ENCODE measurements at regions of chr1 and their contacts with region 1.

Region 1: DNA sequence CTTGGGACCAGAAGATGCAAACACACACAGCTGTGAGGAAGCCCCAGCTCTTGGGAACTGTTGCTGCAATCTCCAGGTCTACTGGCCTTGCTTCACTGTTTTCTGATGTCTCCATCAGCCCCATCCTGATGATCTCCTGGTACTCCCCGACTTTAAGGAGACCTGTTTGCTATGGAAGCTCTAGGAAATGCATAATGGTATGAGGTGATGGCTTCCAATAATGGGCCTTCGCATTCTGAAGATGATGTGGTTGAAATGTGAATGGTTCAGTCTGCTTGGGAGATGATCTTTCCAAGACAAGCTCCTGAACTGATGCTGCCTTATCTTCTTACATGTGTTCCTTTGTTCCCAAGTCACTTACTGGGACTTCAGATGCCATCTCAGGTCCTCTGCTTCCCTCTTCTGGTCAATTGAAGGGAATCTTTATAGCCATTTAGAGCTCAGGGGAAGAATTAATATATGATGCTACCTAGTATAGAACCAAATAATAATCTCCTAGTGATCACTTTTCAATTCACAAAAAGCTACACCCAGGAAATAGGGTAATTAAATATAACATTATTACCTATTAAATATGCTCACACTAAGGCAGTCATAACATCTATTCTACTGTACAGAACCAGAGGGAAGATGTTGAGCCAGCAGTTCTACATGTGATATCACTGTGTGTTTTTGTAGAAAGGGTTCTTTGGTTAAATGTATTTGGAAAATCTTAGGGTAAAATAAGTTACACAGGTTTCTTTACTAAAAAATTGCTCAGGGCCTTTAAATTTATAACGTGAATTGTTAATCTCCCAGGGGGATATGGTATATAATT is 73.9 kb upstream of the VTCN1 start:
- DNase-seq: peak; percentile 50
- H3K4me3 ChIP-seq: no peak overlapping the region
- H3K27ac ChIP-seq: no peak overlapping the region
- H3K27me3 ChIP-seq: no peaks in the 10 kb centered on the region
- CTCF ChIP-seq: peak; percentile 74

Region 2: DNA sequence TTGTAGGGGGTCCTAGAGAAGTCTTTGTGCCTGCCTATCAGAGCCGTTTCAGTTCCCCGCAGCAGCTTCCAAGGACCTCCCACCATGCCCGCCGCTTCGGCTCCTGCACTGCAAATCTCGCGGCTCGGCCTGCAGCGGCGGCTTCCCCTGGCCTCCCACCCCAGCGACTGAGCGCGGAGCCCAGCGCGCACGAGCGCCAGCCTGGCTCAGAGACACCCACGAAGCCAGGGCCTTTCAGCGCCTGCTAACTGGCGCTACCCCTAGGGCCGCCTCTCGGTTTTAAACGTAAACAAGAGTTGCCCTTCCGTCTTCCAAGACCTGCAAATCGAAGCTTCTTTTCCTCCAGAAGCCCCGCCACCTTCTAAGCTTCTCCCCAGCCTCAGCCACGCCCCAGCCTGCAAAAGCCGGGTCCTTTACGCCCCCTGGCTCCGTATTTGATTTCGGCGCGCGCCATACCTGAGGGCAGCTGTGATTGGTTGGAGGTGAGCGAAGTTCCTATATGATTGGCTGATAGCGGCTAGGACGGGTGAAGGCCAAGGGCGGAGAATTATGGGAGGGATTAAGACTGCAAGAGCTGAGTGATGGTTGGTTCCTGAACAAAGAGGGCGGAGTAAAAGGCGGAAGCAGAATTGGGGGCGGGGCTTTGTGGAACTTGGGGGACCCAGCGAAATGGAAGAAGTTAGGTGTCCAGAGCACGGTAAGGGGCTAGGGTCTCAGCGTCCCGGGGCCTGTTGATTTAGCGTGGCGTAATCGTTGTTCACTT is 224.7 kb before region 1 on chr1 and contains the start of gene TTF2:
- CTCF ChIA-PET with region 1: interaction called, 381 read pairs
- POLR2A ChIA-PET with region 1: no interaction called
- DNase-seq: peak; percentile 92
- H3K4me3 ChIP-seq: peak within 1 kb of the TSS; percentile 89
- H3K27ac ChIP-seq: peak within 1 kb of the TSS; percentile 42
- H3K27me3 ChIP-seq: no peaks in the 10 kb centered on the region
- CTCF ChIP-seq: peak; percentile 30
- polyA plus RNA-seq, gene TTF2: 10.0 and 12.4 TPM in 2 replicates

Region 3: GRCh38 chr1:117067533-117068370 is 216.9 kb before region 1 on chr1:
- CTCF ChIA-PET with region 1: interaction called, 381 read pairs
- POLR2A ChIA-PET with region 1: interaction called, 3 read pairs
- DNase-seq: peak; percentile 41
- H3K4me3 ChIP-seq: no peak overlapping the region
- H3K27ac ChIP-seq: no peak overlapping the region
- H3K27me3 ChIP-seq: no peaks in the 10 kb centered on the region
- CTCF ChIP-seq: peak; percentile 90

Region 4: GRCh38 chr1:117077267-117077666 is 207.3 kb before region 1 on chr1:
- CTCF ChIA-PET with region 1: interaction called, 381 read pairs
- POLR2A ChIA-PET with region 1: no interaction called
- DNase-seq: no peak
- H3K4me3 ChIP-seq: no peak overlapping the region
- H3K27ac ChIP-seq: peak overlapping the region; percentile 74
- H3K27me3 ChIP-seq: no peaks in the 10 kb centered on the region
- CTCF ChIP-seq: no peak

Region 5: DNA sequence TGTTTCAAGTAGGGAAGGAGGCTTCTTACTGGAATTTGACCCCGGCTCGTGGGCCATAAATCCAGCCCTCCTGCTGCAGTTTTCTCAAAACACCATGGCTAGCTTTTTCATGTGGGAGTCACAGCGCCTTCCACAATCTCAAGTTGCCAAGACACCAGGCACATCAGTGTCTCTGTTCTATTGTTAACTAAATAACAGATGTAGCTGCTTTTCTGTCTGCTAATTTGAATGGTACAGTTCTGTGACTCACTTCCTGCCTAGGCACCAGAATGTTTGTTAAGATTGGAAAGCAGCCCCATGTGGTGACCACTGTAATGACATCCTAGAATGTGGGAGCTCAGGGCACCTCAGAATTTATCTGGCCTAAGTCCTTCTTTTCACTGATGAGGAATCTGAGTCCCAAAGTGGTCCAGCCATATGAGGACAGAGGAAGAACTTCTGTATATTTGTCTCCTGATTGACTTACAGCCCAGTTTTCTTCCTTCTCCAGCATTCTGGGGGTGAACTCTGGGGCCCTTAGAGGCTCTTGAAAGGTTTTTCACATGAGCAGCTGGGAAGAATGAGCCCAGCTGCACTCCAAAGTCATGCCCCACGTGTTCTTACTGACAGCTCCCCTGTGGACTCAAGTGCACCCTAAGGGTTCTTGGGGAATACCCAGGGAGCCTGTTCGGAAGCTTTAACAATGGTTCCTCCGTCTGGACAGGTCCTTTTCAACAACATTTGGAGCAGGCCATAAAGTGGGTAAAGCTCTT is 190.6 kb before region 1 on chr1:
- CTCF ChIA-PET with region 1: interaction called, 18 read pairs
- POLR2A ChIA-PET with region 1: no interaction called
- DNase-seq: no peak
- H3K4me3 ChIP-seq: no peak overlapping the region
- H3K27ac ChIP-seq: peak overlapping the region; percentile 90
- H3K27me3 ChIP-seq: no peaks in the 10 kb centered on the region
- CTCF ChIP-seq: peak; percentile 29; the same call in 1 of the 2 replicates

Region 6: DNA sequence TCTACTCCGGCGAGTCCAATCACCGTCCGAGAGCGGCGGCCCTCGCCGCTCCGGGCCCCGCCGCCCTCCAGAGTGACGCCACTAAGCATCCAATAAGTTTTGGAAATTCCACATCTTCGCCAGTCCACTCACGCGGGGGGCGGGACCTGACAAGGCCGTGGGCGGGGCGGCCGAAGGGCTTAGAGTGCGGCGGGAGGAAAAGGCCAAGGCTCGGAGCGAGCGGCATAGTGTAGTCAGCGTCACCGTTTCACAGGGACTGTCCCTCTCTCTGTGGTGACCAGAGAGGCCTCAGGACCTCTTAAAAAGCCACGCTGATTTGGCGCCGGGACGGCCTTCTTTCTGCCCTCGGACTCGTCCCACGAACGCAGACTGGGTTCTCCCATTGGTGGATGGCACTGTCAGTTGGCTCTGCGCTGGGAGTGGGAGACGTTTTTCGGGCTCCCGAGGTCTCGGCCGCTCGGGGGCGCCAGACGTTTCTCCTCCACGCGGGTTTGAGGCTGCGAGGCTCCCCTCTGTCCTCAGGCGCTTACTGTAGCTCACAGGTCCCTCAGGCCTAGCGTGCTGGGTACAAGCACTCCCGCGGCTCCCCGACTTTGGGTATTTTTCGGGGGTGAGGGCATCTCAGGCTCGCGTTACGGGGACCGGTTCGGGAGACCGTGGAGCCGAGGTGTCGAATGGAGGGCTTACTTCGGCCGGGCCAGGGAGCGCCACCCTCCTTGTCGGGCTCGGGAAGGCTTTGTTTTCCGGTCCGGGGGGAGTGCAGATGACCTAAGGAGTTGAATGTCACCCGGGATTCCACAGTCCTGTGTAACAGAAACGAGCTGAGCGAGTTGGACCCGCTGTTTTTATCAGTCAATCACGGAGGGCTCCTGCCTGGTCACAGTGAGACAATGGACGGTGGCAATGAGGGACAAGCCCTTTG is 162.6 kb before region 1 on chr1:
- CTCF ChIA-PET with region 1: interaction called, 69 read pairs
- POLR2A ChIA-PET with region 1: interaction called, 3 read pairs
- DNase-seq: peak; percentile 88
- H3K4me3 ChIP-seq: peak overlapping the region; percentile 87
- H3K27ac ChIP-seq: peak overlapping the region; percentile 91
- H3K27me3 ChIP-seq: peaks cover 10% of the 10 kb centered on the region
- CTCF ChIP-seq: peak; percentile 84

Measured in AG04450 (cell line).